Panc1 (cell line): ENCODE measurements at regions of chr17 and their contacts with region 1.

Region 1: GRCh38 chr17:10875979-10876555 is 38.2 kb upstream of the PIRT start:
- DNase-seq: peak; percentile 30
- ATAC-seq: peak; percentile 63; the same call in 1 of the 2 replicates
- H3K4me3 ChIP-seq: no peak overlapping the region
- H3K27ac ChIP-seq: no peak overlapping the region
- H3K4me1 ChIP-seq: no peaks in the 10 kb centered on the region
- H3K27me3 ChIP-seq: no peaks in the 10 kb centered on the region
- CTCF ChIP-seq: peak; percentile 76

Region 2: DNA sequence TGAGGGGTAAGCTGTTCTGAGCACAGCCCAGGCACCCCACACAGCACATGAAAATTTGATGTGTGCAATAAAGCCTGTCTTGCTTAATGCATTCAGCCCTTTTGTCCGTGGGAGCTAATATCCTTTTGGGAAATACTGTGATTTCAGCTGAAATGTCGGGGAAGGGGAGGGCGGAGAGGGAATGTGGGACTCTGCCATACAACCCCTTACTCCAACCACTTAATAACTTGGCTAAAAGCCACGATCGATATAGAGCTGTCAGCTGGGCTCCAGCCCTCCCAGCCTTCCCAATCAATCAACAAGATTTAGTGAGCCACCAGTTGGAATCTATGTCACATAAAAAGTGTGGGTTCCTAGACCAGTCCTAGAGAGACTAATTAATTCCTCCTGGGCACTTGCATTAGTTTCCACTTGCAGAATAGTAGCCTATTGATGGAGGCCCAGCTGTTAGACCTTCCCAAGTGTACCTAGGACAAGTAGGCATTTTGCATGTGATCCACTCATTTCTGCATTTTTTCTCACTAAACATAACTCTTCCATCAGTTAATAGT is 44.6 kb after region 1 on chr17:
- CTCF ChIA-PET with region 1: no interaction called
- POLR2A ChIA-PET with region 1: no interaction called
- in situ Hi-C with region 1: no loop called
- intact Hi-C with region 1: no loop called
- DNase-seq: no peak
- ATAC-seq: no peak
- H3K4me3 ChIP-seq: no peak overlapping the region
- H3K27ac ChIP-seq: no peak overlapping the region
- H3K4me1 ChIP-seq: no peaks in the 10 kb centered on the region
- H3K27me3 ChIP-seq: no peaks in the 10 kb centered on the region
- CTCF ChIP-seq: no peak

Region 3: DNA sequence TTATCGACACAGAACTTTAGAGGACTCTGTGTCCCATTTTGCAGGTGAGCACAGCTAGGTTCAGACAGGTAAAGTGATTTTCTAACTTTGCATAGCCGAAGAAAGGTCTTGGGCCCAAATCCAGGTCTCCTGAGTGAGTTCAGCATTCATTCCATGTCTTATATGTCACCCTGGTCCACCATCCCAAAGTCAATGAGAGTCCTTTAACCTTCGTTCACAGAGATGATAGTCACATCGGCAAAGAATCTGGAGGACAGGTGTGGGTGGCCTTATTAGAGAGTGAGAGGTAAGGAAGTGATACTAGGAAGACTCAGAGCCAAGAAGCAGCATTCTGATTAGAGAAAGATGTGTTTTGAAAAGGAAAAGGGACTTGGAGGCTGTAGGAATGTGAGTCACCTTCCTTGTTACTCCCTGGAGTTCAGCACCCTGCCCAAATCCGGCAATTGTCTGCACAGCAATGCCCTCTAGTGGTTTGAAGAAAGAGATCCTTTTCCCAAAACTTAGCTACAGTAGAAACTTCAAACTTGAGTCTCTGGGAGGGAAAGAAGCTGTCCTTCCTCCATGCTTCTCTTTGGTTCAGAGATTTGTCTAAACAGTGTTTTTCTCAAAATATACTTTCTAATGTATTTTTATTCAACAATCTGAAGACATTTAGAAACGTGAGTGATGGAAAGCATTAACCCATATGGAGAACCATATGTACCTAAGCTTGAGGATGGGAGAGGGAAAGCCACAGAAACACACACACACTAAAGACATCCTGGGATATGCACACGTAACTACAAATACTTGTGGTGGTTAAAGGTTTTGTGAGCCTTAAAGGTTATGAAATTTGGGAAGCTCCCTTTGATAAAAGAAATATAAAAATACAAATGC is 268.5 kb after region 1 on chr17:
- CTCF ChIA-PET with region 1: interaction called, 8 read pairs
- POLR2A ChIA-PET with region 1: no interaction called
- in situ Hi-C with region 1: no loop called
- intact Hi-C with region 1: loop called (anchors 5 kb)
- DNase-seq: peak; percentile 10
- ATAC-seq: no peak
- H3K4me3 ChIP-seq: no peak overlapping the region
- H3K27ac ChIP-seq: no peak overlapping the region
- H3K4me1 ChIP-seq: no peaks in the 10 kb centered on the region
- H3K27me3 ChIP-seq: no peaks in the 10 kb centered on the region
- CTCF ChIP-seq: peak; percentile 73

Region 4: GRCh38 chr17:11935734-11936406 is 1059.8 kb after region 1 on chr17:
- CTCF ChIA-PET with region 1: interaction called, 9 read pairs
- POLR2A ChIA-PET with region 1: no interaction called
- in situ Hi-C with region 1: no loop called
- intact Hi-C with region 1: loop called (anchors 5 kb)
- DNase-seq: peak; percentile 30
- ATAC-seq: no peak
- H3K4me3 ChIP-seq: no peak overlapping the region
- H3K27ac ChIP-seq: no peak overlapping the region
- H3K4me1 ChIP-seq: no peaks in the 10 kb centered on the region
- H3K27me3 ChIP-seq: no peaks in the 10 kb centered on the region
- CTCF ChIP-seq: peak; percentile 94